Heart right ventricle (tissue), 16 donors: ENCODE measurements at regions of chrX and their contacts with region 1.

Region 1: GRCh38 chrX:130916636-130917422 is 13.8 kb upstream of the ENOX2 start:
- DNase-seq: peak in 1 of 2 donors; percentile 9
- ATAC-seq: peak in 4 of 8 donors; percentile 28 to 62 (median 45)
- H3K4me3 ChIP-seq: no peak overlapping the region
- H3K27ac ChIP-seq: no peak overlapping the region
- H3K4me1 ChIP-seq: no peaks in the 10 kb centered on the region
- H3K27me3 ChIP-seq: peaks cover 0 to 30% (median 0%) of the 10 kb centered on the region in 7 donors
- CTCF ChIP-seq: peak; percentile 49 to 90 (median 73)

Region 2: DNA sequence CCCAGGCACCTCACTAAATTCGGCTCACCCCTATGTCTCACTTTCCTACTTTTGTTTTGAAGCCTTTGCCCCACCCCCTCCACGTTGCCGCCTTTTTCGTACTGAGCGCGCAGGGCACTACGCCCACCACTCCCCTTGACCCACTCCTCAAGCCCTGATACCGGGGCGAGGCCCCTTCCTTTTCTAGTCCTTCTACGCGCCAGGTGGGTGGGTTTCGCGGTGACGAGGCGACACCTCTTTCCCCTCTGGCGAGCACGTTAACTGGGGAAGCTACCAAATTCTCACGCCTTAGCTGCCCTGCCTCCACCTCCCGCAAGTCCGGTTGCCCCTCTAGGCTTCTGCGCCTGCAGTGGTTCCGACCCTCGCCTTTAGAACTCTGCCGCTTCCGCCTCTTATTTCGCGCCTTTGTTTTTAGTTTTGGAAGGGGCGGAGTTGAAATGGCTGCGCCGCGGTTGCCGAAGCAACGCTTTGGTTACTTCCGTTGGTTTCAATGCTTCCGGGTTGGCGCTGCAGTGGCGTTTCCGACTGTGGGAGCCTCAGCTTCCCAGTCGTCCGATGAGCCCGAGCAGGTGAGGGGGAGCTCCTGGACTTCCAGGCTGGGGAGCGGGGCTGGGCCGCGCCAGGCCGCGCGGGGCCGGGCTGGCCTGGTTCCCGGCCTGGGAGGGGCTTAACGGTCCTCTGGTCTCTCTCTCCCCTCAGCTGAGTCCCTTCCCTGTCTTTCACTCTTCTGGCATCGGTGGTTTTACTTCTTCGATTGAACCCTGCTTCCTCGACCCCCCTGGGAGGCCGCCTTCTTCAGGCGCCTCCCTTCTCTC is 577.2 kb before region 1 on chrX and contains the start of gene SLC25A14:
- intact Hi-C with region 1: loop called in 3 of 10 experiments (anchors 5 to 10 kb)
- DNase-seq: peak; percentile 60 to 65
- ATAC-seq: peak; percentile 85 to 97 (median 91)
- H3K4me3 ChIP-seq: peak within 1 kb of the TSS; percentile 33 to 81 (median 69)
- H3K27ac ChIP-seq: peak within 1 kb of the TSS in 6 of 10 donors; percentile 54 to 75 (median 64)
- H3K4me1 ChIP-seq: peaks cover 0 to 8% (median 0%) of the 10 kb centered on the region in 9 donors
- H3K27me3 ChIP-seq: no peaks in the 10 kb centered on the region
- CTCF ChIP-seq: no peak
- total RNA-seq, gene SLC25A14: 4.1 to 8.0 (median 6.5) TPM

Region 3: DNA sequence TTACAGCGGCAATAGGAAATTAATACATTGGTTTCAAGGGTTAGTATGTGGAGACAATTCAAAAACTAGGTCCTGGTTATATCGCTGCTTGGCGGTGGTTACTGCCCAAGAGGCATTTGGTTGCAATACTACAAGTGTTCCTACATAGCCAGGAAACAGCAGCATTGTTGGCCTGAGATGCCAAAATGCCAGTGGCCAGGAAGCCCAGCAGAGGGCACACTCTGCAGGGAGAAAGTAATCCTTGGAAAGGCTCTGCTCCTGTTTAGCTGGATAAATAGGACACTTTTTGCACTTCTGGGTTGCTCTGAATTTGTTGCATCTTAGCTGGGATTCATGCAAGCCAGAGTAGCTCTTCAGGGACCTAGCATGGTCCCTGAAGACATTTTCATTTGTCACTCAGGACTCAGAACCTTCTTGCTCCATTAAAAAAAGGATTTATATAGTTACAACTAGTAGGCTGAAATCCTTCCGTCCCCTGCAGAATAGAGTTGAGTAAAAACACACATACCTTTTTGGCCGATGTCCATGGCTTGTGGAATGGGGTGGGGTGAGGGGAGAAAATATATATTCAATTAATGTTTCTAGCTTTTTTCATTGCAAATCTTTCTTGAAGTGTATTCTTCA is 523.3 kb before region 1 on chrX:
- intact Hi-C with region 1: loop called in 8 of 10 experiments (anchors 2 to 10 kb)
- DNase-seq: peak; percentile 4 to 16
- ATAC-seq: peak in 4 of 8 donors; percentile 44 to 69 (median 56)
- H3K4me3 ChIP-seq: no peak overlapping the region
- H3K27ac ChIP-seq: no peak overlapping the region
- H3K4me1 ChIP-seq: no peaks in the 10 kb centered on the region
- H3K27me3 ChIP-seq: peaks cover 0 to 47% (median 0%) of the 10 kb centered on the region in 7 donors
- CTCF ChIP-seq: peak in 8 of 9 donors; percentile 23 to 68 (median 60)

Region 4: DNA sequence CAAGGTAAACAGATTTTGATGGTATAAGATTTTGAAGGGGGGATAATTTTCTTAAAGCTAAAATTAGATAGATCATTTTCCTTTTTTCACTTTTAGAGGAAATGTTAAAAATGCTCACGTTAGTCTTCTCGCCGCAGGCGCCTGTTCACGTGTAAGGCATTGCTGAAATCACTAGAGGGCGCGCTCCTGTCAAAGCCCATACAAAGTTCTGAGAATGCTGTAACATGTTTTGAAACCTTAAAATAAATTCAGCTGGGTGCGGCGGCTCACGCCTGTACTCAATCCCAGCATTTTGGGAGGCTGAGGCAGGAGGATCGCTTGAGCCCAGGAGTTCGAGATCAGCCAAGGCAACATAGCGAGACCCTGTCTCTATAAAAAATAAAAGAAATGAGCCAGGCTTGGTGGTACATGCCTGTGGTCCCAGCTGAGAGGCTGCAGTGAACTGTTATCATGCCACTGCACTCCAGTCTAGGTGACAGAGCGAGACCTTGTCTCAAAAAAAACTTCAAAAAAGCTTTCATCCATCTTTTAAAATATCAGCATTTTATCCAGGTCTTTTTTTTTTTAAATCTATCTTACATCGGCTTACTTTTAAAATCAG is 377.0 kb before region 1 on chrX:
- intact Hi-C with region 1: loop called in 9 of 10 experiments (anchors 1 to 10 kb)
- DNase-seq: peak; percentile 17 to 23
- ATAC-seq: no peak
- H3K4me3 ChIP-seq: no peak overlapping the region
- H3K27ac ChIP-seq: no peak overlapping the region
- H3K4me1 ChIP-seq: no peaks in the 10 kb centered on the region
- H3K27me3 ChIP-seq: peaks cover 0 to 24% (median 0%) of the 10 kb centered on the region in 7 donors
- CTCF ChIP-seq: peak; percentile 25 to 78 (median 63)

Region 5: DNA sequence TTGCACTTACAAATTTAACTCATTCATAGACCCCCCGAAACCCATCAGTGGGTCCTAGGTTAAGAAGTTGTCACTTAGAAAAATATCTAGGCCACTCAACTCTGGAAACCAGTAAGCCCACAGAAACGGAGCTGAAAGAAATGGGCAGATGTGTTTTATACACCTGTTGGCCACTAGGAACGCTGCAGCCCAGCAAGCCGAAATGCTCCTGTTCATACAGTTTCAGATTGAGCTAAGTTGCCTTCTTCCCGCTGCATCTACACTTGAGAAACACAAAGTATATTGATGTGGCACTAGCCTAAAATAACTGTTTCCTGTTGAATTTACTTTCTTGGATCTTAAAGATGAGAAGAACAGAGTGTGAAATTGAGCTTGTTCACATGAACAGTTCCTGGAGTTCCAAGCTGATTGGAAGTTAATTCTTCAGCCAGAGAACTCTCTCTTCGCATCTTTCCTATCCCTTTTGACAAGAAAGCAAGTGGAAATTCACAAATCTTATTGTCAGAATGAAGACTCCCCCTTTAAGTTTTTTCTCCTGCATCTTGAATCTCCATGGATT is 340.9 kb before region 1 on chrX:
- intact Hi-C with region 1: loop called in 8 of 10 experiments (anchors 2 to 10 kb)
- DNase-seq: peak; percentile 4 to 21
- ATAC-seq: peak in 1 of 8 donors; percentile 38
- H3K4me3 ChIP-seq: no peak overlapping the region
- H3K27ac ChIP-seq: no peak overlapping the region
- H3K4me1 ChIP-seq: no peaks in the 10 kb centered on the region
- H3K27me3 ChIP-seq: peaks cover 0 to 30% (median 0%) of the 10 kb centered on the region in 7 donors
- CTCF ChIP-seq: peak; percentile 41 to 73 (median 70)

Region 6: GRCh38 chrX:130848763-130849162 is 68.1 kb before region 1 on chrX:
- intact Hi-C with region 1: no loop called
- DNase-seq: no peak
- ATAC-seq: no peak
- H3K4me3 ChIP-seq: no peak overlapping the region
- H3K27ac ChIP-seq: no peak overlapping the region
- H3K4me1 ChIP-seq: no peaks in the 10 kb centered on the region
- H3K27me3 ChIP-seq: peaks cover 0 to 14% (median 0%) of the 10 kb centered on the region in 7 donors
- CTCF ChIP-seq: no peak